ENCODE measurements at regions of chr16 and their contacts with region 1.

Region 1: DNA sequence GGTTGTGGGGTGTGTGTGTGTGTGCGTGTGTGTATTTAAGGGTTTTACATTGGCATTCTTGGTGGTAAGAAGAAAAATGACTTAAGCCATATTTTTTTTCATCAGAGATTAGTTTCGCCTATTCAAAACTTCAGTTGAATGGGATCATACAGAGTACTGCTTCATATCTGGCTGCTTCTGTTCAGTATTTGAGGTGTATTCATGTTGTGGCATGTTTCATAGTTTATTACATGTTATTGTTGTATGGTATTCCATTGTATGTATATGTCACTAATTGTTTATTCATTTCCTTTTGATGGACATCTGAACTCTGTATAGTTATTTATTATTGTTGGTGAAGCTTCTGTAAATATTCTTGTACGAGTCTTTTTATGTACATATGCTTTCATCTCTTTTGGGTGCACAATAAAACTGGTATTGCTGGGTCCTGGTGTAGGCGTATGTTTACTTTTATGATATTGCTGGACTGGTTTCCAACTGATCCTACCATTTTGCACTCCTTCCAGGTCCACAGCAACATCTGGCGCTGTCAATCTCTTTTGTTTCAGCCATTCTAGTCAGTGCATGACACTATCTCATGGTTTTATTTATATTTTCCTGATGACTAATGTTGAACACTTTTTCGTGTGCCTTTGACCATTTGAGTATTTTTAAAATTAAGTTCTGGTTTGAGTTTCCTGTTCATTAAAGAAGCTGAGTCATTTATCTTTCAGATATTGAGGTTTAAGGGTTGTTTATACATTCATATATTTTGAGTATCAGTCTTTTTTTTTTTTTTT is 77.5 kb upstream of the MAF start:
- DNase-seq: no peak
- ATAC-seq: no peak
- H3K4me3 Mint-ChIP-seq: no peak overlapping the region
- H3K27ac Mint-ChIP-seq: no peak overlapping the region
- H3K4me1 Mint-ChIP-seq: no peaks in the 10 kb centered on the region
- H3K27me3 Mint-ChIP-seq: no peaks in the 10 kb centered on the region
- CTCF ChIP-seq: no peak

Region 2: DNA sequence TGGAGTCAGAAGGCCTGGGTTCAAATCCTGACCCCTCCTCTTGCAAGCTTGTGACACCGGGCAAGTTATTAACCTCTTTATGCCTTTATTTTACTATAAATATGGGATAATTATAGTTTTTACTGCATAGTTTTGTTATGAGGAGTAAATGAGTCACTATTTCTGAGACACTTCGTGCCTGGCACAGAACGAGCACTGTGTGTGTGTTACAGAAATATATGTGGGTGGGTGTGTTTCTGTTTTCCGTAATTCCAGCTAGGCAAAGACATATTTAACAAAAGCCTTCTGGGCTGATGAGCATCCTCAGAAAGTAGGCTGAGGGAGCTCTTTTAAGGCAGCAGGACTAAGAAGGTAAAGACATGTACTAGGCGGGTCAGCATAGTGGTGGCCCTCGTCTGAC is 495.4 kb before region 1 on chr16:
- CTCF ChIA-PET with region 1: no interaction called
- POLR2A ChIA-PET with region 1: interaction called, 10 read pairs
- DNase-seq: no peak
- ATAC-seq: no peak
- H3K4me3 Mint-ChIP-seq: no peak overlapping the region
- H3K27ac Mint-ChIP-seq: no peak overlapping the region
- H3K4me1 Mint-ChIP-seq: peaks cover 10% of the 10 kb centered on the region
- H3K27me3 Mint-ChIP-seq: no peaks in the 10 kb centered on the region
- CTCF ChIP-seq: no peak

Measured in WTC11 (cell line).